GM13977 (cell line): ENCODE measurements at regions of chr13 and their contacts with region 1.

Region 1: GRCh38 chr13:19681517-19681916 is 48.1 kb downstream of the MPHOSPH8 start:
- DNase-seq: no peak
- CTCF ChIP-seq: no peak

Region 2: GRCh38 chr13:19305434-19305833 is 376.1 kb before region 1 on chr13:
- in situ Hi-C with region 1: no loop called
- DNase-seq: no peak
- CTCF ChIP-seq: no peak

Region 3: GRCh38 chr13:19587635-19588300 is 93.7 kb before region 1 on chr13:
- in situ Hi-C with region 1: loop called (anchors 25 kb)
- DNase-seq: peak; percentile 46
- CTCF ChIP-seq: peak; percentile 72

Region 4: GRCh38 chr13:20197361-20197834 is 515.9 kb after region 1 on chr13:
- in situ Hi-C with region 1: no loop called
- DNase-seq: peak; percentile 73
- CTCF ChIP-seq: peak; percentile 66